ENCODE measurements at regions of chr19 and their contacts with region 1.

Region 1: DNA sequence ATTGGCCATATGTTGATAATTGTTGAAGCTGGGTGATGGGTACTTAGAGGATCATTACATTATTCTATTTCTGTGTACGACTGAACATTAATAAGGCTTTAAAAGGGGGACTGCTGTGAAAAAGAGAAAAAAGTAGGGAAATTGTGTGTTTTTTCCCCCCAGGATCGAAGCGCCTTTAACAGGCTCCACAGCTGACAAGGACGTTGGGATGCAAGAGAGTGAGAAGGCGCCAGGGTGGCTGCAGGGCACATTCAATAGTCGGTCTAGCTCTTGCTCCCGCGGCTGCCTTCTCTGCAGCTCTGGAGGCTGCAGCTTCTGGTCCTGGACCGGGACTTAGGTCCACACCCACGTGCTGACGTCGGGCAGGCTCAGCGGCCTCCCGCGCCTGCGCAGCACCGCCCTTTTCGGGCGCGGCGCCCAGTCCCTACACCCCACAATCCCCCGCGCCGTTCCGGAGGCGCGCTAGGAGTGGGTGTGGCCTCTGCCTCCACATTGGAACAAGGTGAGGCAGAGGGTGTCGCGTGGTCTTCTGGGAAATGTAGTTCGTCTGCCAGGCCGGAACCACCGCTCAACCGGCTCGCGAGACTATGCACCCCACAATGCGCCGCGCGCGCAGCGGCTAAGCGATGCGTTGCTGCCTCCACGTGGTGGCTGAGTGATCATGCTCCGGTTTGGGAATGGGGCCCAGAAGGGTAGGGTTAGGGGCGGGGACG is 4.9 kb upstream of the LRFN3 start:
- DNase-seq: peak; percentile 99 to 100 (median 99)
- ATAC-seq: peak; percentile 99 to 100 (median 100)
- H3K4me3 ChIP-seq: peak overlapping the region in 9 of 12 donors; percentile 2 to 42 (median 34)
- H3K27ac ChIP-seq: peak overlapping the region in 11 of 12 donors; percentile 50 to 88 (median 70)
- H3K4me1 ChIP-seq: peaks cover 0 to 35% (median 14%) of the 10 kb centered on the region in 12 donors
- H3K27me3 ChIP-seq: peaks cover 0 to 5% (median 0%) of the 10 kb centered on the region in 9 donors
- CTCF ChIP-seq: peak; percentile 77 to 98 (median 86)
- POLR2A ChIP-seq: peak; percentile 31 to 92

Region 2: DNA sequence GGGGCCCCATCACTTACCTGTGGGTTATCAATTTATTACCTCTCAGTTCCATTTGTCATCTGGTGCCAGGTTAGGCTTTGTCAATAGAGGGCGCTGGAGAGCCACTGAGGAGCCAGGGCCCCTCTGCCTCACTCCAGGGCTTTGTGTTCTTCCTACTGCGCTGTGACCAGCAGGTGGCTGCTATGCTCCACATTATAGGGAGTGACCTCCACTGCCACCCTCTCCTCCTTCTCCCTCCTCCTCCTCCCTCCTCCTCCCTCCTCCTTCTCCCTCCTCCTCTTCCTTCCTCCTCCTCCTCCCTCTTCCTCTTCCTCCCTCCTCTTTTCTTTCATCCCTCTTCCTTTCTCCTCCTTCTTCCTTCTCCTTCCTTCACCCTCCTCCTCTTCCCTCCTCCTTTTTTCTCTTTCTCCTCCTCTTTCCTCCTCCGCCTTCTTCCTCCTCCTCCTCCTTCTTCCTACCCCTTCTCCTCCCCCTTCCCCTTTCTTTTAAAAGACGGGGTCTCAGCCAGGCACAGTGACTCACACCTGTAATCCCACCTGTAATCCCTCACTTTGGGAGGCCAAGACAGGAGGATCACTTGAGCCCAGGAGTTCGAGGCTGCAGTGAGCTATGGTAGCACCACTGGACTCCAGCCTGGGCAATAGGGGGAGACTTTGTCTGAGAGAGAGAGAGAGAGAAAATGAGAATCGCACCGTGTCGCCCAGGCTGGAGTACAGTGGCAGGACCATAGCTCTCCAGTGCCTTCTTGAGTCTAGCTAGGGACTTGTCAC is 237.3 kb before region 1 on chr19:
- intact Hi-C with region 1: loop called in 6 of 10 experiments (anchors 2 to 10 kb)
- DNase-seq: peak; percentile 82 to 91 (median 86)
- ATAC-seq: peak; percentile 98 to 100 (median 100)
- H3K4me3 ChIP-seq: no peak overlapping the region
- H3K27ac ChIP-seq: no peak overlapping the region
- H3K4me1 ChIP-seq: peaks cover 0 to 4% (median 0%) of the 10 kb centered on the region in 12 donors
- H3K27me3 ChIP-seq: no peaks in the 10 kb centered on the region
- CTCF ChIP-seq: peak; percentile 94 to 100 (median 96)
- POLR2A ChIP-seq: no peak

Region 3: GRCh38 chr19:35740423-35741202 is 190.7 kb before region 1 on chr19:
- intact Hi-C with region 1: loop called in 6 of 10 experiments (anchors 1 to 10 kb)
- DNase-seq: peak; percentile 97 to 99 (median 99)
- ATAC-seq: peak; percentile 83 to 89 (median 86)
- H3K4me3 ChIP-seq: peak overlapping the region; percentile 20 to 80 (median 64)
- H3K27ac ChIP-seq: peak overlapping the region in 11 of 12 donors; percentile 60 to 95 (median 74)
- H3K4me1 ChIP-seq: peaks cover 7 to 52% (median 23%) of the 10 kb centered on the region in 12 donors
- H3K27me3 ChIP-seq: no peaks in the 10 kb centered on the region
- CTCF ChIP-seq: peak in 3 of 12 donors; percentile 10 to 31 (median 24)
- POLR2A ChIP-seq: peak in 1 of 2 donors; percentile 33

Region 4: GRCh38 chr19:35757749-35758608 is 173.3 kb before region 1 on chr19 and contains the start of gene PROSER3:
- intact Hi-C with region 1: loop called in 1 of 10 experiments (anchors 5 kb)
- DNase-seq: peak; percentile 98 to 99 (median 99)
- ATAC-seq: peak; percentile 75 to 89 (median 82)
- H3K4me3 ChIP-seq: peak within 1 kb of the TSS; percentile 68 to 99 (median 86)
- H3K27ac ChIP-seq: peak within 1 kb of the TSS; percentile 88 to 100 (median 96)
- H3K4me1 ChIP-seq: peaks cover 0 to 51% (median 37%) of the 10 kb centered on the region in 12 donors
- H3K27me3 ChIP-seq: no peaks in the 10 kb centered on the region
- CTCF ChIP-seq: no peak
- POLR2A ChIP-seq: peak in 1 of 2 donors; percentile 63
- total RNA-seq, gene PROSER3: 1.9 to 19.7 (median 9.7) TPM

Region 5: GRCh38 chr19:35882114-35882832 is 49.0 kb before region 1 on chr19:
- intact Hi-C with region 1: loop called (anchors 1 to 5 kb)
- DNase-seq: peak in 1 of 5 donors; percentile 39
- ATAC-seq: peak in 2 of 4 donors; percentile 40 to 44
- H3K4me3 ChIP-seq: no peak overlapping the region
- H3K27ac ChIP-seq: no peak overlapping the region
- H3K4me1 ChIP-seq: peaks cover 0 to 8% (median 0%) of the 10 kb centered on the region in 12 donors
- H3K27me3 ChIP-seq: no peaks in the 10 kb centered on the region
- CTCF ChIP-seq: peak; percentile 33 to 72 (median 60)
- POLR2A ChIP-seq: no peak

Region 6: DNA sequence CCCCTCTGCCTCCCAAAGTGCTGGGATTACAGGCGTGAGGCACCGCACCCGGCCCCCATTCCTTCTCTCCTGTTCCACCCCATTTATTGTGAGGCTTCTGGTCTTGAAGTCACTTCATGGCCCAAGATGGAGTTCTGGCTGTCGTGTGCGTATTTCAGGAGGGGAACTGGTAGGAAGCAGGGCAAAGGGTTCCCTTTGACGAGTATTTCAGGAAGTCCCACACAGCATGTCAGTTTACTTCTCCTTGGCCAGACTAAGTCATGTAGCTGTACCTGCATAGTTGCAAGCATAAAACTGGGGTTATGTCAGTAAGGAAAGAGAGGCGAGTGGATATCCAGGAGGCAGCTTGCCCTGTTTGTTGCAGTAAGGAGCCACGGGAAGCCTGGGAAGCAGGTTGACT is 133.5 kb after region 1 on chr19:
- intact Hi-C with region 1: no loop called
- DNase-seq: no peak
- ATAC-seq: no peak
- H3K4me3 ChIP-seq: no peak overlapping the region
- H3K27ac ChIP-seq: no peak overlapping the region
- H3K4me1 ChIP-seq: no peaks in the 10 kb centered on the region
- H3K27me3 ChIP-seq: no peaks in the 10 kb centered on the region
- CTCF ChIP-seq: no peak
- POLR2A ChIP-seq: no peak